ENCODE measurements at regions of chr4 and their contacts with region 1.

Region 1: GRCh38 chr4:102620697-102621497 is 119.7 kb downstream of the NFKB1 start:
- DNase-seq: peak; percentile 60
- H3K4me3 ChIP-seq: no peak overlapping the region
- H3K27ac ChIP-seq: peak overlapping the region; percentile 69
- H3K4me1 ChIP-seq: no peaks in the 10 kb centered on the region
- H3K27me3 ChIP-seq: no peaks in the 10 kb centered on the region
- CTCF ChIP-seq: peak; percentile 45

Region 2: DNA sequence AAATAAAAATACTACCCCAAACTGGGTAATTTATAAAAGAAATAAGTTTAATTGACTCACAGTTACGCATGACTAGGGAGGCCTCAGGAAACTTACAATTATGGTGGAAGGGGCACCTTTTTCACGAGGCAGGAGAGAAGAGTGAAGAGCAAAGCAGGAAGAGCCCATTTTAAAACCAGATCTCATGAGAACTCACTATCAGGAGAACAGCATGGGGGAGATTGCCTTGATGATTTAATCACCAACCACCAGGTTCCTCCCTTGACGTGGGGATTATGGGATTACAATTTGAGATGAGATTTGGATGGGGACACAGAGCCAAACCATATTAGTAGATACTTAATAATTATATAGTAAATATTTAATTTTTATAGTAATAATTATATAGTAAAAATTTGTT is 258.0 kb after region 1 on chr4:
- intact Hi-C with region 1: no loop called
- DNase-seq: no peak
- H3K4me3 ChIP-seq: no peak overlapping the region
- H3K27ac ChIP-seq: no peak overlapping the region
- H3K4me1 ChIP-seq: no peaks in the 10 kb centered on the region
- H3K27me3 ChIP-seq: no peaks in the 10 kb centered on the region
- CTCF ChIP-seq: no peak

Region 3: DNA sequence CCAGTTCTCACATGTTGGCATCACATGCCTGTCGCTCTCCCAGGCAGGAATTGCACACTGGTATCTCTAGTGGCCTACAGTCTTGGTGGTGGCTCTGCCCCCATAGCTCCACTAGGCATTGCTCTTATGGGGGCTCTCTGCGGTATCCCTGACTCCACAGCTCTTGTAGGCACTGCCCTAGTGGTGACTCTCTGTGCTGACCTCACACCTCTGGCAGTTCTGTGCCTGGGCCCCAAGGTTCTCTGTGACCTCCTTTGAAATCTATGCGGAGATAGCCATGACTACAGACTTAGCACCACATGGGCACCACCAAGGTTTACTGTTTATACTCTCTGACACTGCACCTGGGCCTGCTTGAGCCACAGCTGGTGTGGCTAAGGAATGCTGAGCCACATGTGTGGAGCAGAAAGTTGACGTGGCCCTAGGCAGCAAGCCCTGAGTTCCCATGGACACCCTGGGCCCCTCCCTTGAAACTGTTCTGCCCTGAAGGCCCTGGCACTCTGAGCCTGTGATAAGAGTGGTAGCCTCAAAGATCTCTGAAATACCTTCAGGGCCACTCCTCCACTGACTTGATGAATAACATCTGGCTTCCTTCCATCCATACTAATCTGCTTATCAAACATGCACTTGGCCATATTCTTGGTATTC is 390.6 kb after region 1 on chr4:
- intact Hi-C with region 1: loop called (anchors 2 kb)
- DNase-seq: peak; percentile 53
- H3K4me3 ChIP-seq: no peak overlapping the region
- H3K27ac ChIP-seq: no peak overlapping the region
- H3K4me1 ChIP-seq: peaks cover 4% of the 10 kb centered on the region
- H3K27me3 ChIP-seq: no peaks in the 10 kb centered on the region
- CTCF ChIP-seq: no peak

Region 4: DNA sequence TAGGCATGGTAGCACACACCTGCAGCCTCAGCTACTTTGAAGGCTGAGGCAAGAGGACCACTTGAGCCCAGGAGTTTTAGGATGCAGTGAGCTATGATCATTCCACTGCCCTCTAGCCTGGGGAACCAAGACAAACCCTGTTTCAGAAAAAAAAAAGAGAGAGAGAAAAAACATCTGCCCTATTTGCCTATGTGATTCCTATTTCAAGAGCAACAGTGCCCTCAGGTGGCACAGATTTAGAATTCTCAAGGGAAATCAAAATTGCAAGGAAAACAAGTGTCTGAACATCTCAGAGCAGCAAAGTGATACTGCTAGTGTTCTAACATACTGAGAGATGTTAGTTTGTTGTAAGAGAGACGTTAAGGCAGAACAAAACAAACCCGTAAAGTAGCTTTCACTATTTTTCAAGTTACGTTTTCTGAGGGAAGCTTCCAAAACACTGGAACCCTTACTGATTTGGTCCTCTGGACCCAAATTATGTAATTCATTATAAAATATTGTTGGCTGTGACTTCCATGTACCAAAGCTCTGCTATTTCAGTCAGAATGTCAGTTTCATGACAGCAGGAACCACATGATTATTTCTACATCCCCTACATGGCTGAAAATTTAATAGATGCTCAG is 470.8 kb after region 1 on chr4:
- intact Hi-C with region 1: loop called (anchors 5 kb)
- DNase-seq: peak; percentile 32
- H3K4me3 ChIP-seq: no peak overlapping the region
- H3K27ac ChIP-seq: no peak overlapping the region
- H3K4me1 ChIP-seq: no peaks in the 10 kb centered on the region
- H3K27me3 ChIP-seq: no peaks in the 10 kb centered on the region
- CTCF ChIP-seq: peak; percentile 24

Measured in colonic mucosa (tissue), 4 donors.